Motor neuron (in vitro differentiated cells): ENCODE measurements at regions of chr7 and their contacts with region 1.

Region 1: GRCh38 chr7:103074519-103075336 is at the starts of genes ARMC10 and FBXL13:
- ATAC-seq: peak; percentile 77 to 93 (median 90)
- H3K4me3 ChIP-seq: peak within 1 kb of the TSS; percentile 52 to 85 (median 58)
- H3K27ac ChIP-seq: peak within 1 kb of the TSS; percentile 64 to 90
- H3K4me1 ChIP-seq: peaks cover 4 to 11% of the 10 kb centered on the region in 2 donors
- total RNA-seq, gene ARMC10: 21.1 to 35.4 (median 25.9) TPM
- total RNA-seq, gene FBXL13: 1.2 to 10.1 (median 3.1) TPM

Region 2: DNA sequence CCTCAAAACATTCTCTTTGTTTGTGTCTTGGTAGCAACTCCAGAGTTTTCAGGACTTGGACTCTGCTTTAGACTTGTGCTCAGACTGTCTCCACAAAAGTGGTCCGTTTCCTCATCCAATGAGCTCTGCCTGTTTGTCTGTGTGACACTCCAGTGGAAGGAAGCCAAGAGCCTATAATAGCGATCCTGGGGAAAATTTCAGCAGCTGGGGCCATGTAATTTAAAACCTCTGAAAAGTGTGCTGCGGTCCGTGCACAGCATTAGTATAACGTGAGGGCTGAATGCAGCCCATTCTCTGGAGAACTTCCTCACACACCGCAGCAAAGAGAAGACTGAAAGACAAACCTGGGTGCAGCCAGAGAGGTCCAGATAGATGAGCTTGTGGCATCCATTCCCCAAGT is 162.0 kb before region 1 on chr7 and contains the start of gene LRRC17:
- in situ Hi-C with region 1: loop called in 1 of 9 experiments (anchors 25 kb)
- ATAC-seq: peak in 3 of 8 experiments; percentile 27 to 93 (median 42)
- H3K4me3 ChIP-seq: no peak within 1 kb of the TSS
- H3K27ac ChIP-seq: no peak within 1 kb of the TSS
- H3K4me1 ChIP-seq: no peaks in the 10 kb centered on the region
- total RNA-seq, gene LRRC17: 0.42 to 110 (median 1.7) TPM

Region 3: DNA sequence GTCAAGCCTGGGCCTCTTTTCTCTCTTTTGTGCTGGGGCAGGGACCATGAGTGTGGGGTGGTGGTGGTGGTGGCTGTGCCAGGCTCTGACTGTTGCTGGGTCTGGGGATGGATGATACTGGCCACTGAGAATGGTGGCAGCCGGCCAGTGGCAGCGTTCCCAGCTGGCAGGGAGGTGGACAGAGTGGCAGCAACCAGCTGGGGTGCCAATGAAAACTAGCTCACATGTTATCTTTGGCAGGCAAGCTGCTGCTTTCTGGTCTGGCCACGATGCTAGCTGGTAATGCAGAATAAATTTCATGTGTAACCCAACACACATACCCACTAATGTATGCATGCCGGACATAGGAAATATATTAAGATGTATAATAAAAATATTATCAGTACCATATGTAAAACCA is 466.3 kb after region 1 on chr7:
- in situ Hi-C with region 1: no loop called
- ATAC-seq: peak in 2 of 8 experiments; percentile 52 to 53
- H3K4me3 ChIP-seq: no peak overlapping the region
- H3K27ac ChIP-seq: no peak overlapping the region
- H3K4me1 ChIP-seq: no peaks in the 10 kb centered on the region